Sigmoid colon (tissue), 7 donors: ENCODE measurements at regions of chr1 and their contacts with region 1.

Region 1: GRCh38 chr1:89022167-89022959 is at the start of gene GBP3:
- DNase-seq: no peak
- H3K4me3 ChIP-seq: peak within 1 kb of the TSS; percentile 29 to 50 (median 44)
- H3K27ac ChIP-seq: peak within 1 kb of the TSS; percentile 72 to 84 (median 80)
- H3K4me1 ChIP-seq: peaks cover 0 to 12% (median 8%) of the 10 kb centered on the region in 4 donors
- H3K27me3 ChIP-seq: no peaks in the 10 kb centered on the region
- CTCF ChIP-seq: no peak
- EP300 ChIP-seq: no peak
- POLR2A ChIP-seq: no peak
- total RNA-seq, gene GBP3: 6.4 to 31.4 (median 15.2) TPM

Region 2: DNA sequence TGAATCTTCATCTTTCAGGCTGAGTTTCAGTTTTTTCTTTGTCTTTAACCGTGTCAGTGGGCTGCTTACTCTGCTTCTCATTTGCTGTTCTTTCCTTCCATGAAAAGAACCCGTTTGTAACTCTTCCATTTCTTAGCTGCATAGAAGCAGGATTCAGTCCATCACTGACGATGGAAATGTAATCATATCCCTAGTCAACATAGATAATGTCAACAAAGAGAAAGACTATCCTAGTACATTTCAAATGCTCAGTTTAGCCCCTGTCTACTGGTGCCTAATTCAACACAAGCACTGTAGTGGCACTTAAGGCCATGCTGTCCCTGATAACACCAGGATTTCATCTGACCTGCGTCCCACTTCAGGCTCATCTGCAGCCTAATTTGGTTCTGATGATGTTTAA is 42.3 kb after region 1 on chr1:
- intact Hi-C with region 1: loop called (anchors 5 kb)
- DNase-seq: no peak
- H3K4me3 ChIP-seq: peak overlapping the region; percentile 35 to 63 (median 54)
- H3K27ac ChIP-seq: peak overlapping the region; percentile 82 to 91 (median 88)
- H3K4me1 ChIP-seq: peaks cover 0 to 44% (median 25%) of the 10 kb centered on the region in 4 donors
- H3K27me3 ChIP-seq: no peaks in the 10 kb centered on the region
- CTCF ChIP-seq: no peak
- EP300 ChIP-seq: no peak
- POLR2A ChIP-seq: no peak

Region 3: GRCh38 chr1:89133747-89134146 is 111.4 kb after region 1 on chr1:
- intact Hi-C with region 1: no loop called
- DNase-seq: no peak
- H3K4me3 ChIP-seq: no peak overlapping the region
- H3K27ac ChIP-seq: no peak overlapping the region
- H3K4me1 ChIP-seq: peaks cover 0 to 18% (median 15%) of the 10 kb centered on the region in 4 donors
- H3K27me3 ChIP-seq: no peaks in the 10 kb centered on the region
- CTCF ChIP-seq: no peak
- EP300 ChIP-seq: no peak
- POLR2A ChIP-seq: no peak